Activated naive CD4-positive, alpha-beta T cell treated with anti-CD3 and anti-CD28 coated beads, Interleukin-2, amount 10 ng/mL, durations not matched to agents 7 days and 5 days (primary cell): ENCODE measurements at regions of chr11 and their contacts with region 1.

Region 1: GRCh38 chr11:46675288-46675851 is 25.0 kb downstream of the ARHGAP1 start:
- DNase-seq: no peak
- H3K4me3 Mint-ChIP-seq: no peak overlapping the region
- H3K27ac Mint-ChIP-seq: peak overlapping the region; percentile 93
- H3K4me1 Mint-ChIP-seq: peaks cover 64% of the 10 kb centered on the region
- H3K27me3 Mint-ChIP-seq: no peaks in the 10 kb centered on the region

Region 2: GRCh38 chr11:46352063-46352841 is 323.1 kb before region 1 on chr11:
- CTCF ChIA-PET with region 1: no interaction called
- DNase-seq: peak; percentile 82
- H3K4me3 Mint-ChIP-seq: peak overlapping the region; percentile 69
- H3K27ac Mint-ChIP-seq: peak overlapping the region; percentile 78
- H3K4me1 Mint-ChIP-seq: peaks cover 73% of the 10 kb centered on the region
- H3K27me3 Mint-ChIP-seq: no peaks in the 10 kb centered on the region

Region 3: DNA sequence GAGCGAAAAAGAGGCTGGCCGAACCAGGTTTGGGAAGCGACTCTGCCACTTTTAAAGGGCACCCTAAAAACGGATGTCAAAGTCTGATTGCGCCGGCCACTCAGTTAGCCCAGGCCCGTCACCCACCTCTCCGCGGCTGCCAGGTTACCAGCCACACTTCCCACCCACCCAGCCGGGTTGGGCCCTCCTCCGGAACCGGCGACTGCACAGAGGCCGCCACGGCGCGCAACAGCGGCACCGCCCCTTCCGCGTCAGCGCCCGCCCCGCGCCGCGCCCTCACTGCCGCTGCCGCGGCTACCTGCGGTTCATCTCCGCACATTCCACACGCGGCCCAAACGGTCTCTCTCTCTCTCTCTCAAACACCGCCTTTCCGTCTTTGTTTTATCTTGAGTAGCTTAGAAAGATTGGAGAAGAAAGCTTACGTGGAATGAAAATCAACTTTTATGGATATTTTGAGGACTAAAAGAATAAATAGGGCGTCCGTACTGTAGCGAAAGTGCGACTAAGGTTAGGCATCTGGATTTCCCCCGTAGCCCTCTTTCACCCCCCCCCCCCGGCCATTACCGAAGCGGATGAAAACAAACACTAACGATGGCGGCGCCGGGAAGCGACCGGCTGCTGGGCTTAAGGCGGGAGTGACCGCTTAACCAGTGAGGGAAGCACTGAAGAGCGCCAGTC is 58.2 kb before region 1 on chr11 and contains the starts of genes ATG13 and HARBI1:
- CTCF ChIA-PET with region 1: interaction called, 12 read pairs
- DNase-seq: peak; percentile 95
- H3K4me3 Mint-ChIP-seq: peak within 1 kb of the TSS; percentile 91
- H3K27ac Mint-ChIP-seq: peak within 1 kb of the TSS; percentile 98
- H3K4me1 Mint-ChIP-seq: peaks cover 38% of the 10 kb centered on the region
- H3K27me3 Mint-ChIP-seq: no peaks in the 10 kb centered on the region

Region 4: DNA sequence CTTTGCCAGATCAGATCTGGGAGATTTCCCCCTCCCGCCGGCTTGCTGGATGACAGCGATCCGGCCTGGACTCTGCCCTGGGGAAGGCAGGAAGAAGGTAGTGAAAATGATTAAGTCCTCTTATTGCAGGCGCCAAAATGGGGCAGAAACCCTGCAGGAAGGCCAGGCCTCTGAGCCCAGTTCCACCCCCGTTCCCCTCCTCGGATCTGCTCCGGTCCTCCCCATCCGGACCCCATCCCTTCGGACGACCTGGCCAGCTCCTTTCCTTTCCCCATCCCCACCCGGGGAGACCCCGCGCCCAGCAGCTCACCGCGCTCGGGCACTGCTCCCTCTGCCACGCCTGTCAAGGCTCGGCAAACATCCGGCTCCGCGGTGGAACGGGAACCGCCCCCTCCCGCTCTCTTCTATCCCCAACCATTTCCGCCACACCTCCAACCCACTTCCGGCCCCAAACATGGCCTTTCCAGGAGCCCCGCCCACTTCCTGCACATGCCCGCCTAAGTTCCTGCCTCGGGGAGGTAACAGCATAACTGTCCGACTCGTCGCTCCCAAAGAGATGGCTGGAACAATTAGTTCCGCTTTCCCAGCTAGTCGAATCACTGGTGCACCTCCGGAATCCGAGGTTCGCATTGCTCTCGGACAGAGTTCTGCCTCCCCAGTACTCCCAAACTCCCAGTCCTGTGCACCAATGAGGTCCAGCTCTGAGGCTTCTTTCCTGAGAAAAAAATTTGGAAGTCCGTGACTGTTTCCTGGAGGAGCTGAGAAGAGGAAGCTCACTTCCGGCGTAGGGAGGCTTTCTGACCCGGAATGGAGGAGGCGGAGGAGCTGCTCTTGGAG is 25.1 kb after region 1 on chr11 and contains the starts of genes ARHGAP1 and ZNF408:
- CTCF ChIA-PET with region 1: interaction called, 11 read pairs
- DNase-seq: peak; percentile 100
- H3K4me3 Mint-ChIP-seq: peak within 1 kb of the TSS; percentile 99
- H3K27ac Mint-ChIP-seq: peak within 1 kb of the TSS; percentile 98
- H3K4me1 Mint-ChIP-seq: peaks cover 64% of the 10 kb centered on the region
- H3K27me3 Mint-ChIP-seq: no peaks in the 10 kb centered on the region

Region 5: DNA sequence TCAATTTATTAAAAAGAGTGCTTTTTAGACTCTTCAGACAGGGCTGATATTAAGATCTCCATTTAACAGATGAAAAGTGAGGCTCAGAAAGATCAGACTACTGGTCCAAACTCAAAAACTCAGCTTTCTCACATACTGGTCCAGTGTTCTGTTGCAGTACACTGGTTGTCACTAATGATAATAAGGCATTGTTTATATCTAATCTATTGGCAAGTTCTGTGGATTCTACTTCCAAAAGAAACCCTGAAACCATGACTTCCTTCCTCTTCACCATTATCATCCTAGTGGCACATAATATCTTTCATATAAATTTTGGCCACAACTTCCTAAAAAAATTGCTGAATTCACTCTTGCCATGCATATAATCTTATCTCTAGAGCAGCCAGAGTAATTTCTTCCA is 80.6 kb after region 1 on chr11:
- CTCF ChIA-PET with region 1: no interaction called
- DNase-seq: no peak
- H3K4me3 Mint-ChIP-seq: no peak overlapping the region
- H3K27ac Mint-ChIP-seq: peak overlapping the region; percentile 11
- H3K4me1 Mint-ChIP-seq: no peaks in the 10 kb centered on the region
- H3K27me3 Mint-ChIP-seq: no peaks in the 10 kb centered on the region